ENCODE measurements at regions of chr1 and their contacts with region 1.

Region 1: GRCh38 chr1:165397944-165398343 is 41.4 kb upstream of the LMX1A start:
- DNase-seq: peak in 1 of 5 donors; percentile 46
- H3K4me3 ChIP-seq: no peak overlapping the region
- H3K27ac ChIP-seq: no peak overlapping the region
- H3K4me1 ChIP-seq: peaks cover 2% of the 10 kb centered on the region
- H3K27me3 ChIP-seq: no peaks in the 10 kb centered on the region
- CTCF ChIP-seq: no peak
- EP300 ChIP-seq: no peak
- POLR2A ChIP-seq: no peak

Region 2: GRCh38 chr1:165580941-165581871 is 183.3 kb after region 1 on chr1:
- intact Hi-C with region 1: loop called in 1 of 4 experiments (anchors 5 kb)
- DNase-seq: no peak
- H3K4me3 ChIP-seq: no peak overlapping the region
- H3K27ac ChIP-seq: no peak overlapping the region
- H3K4me1 ChIP-seq: no peaks in the 10 kb centered on the region
- H3K27me3 ChIP-seq: no peaks in the 10 kb centered on the region
- CTCF ChIP-seq: no peak
- EP300 ChIP-seq: no peak
- POLR2A ChIP-seq: no peak

Measured in ovary (tissue), 10 donors.